GM12878 (cell line): ENCODE measurements at regions of chr4 and their contacts with region 1.

Region 1: DNA sequence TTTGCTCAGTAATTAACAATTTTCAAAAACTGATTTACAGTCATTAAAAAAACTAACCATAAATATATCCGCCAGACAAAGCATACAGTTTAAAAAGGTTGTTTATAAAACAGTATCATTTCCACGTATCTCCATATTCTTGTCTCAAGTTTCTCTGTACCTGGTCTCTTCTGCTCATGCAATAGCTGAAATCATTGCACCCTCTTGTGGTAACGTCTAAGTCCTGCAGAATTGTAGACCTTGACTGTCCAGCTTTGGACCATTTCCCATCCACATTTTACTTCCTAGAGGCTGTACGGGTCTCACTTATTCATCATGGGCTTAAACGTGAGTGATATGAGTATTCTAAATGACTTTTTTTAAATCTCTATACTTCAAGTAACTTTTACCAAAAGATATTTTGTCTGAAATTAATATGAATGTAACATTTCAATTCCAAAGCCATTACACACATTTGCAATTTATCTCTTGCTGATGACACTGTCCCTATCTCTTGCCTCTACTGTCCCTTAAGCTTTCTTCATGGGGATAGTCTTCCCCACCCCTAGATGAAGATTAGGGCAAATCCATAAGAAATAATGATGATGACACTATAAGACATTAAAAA is 118.5 kb downstream of the BTC start:
- DNase-seq: no peak
- ATAC-seq: peak; percentile 93
- H3K4me3 ChIP-seq: no peak overlapping the region
- H3K27ac ChIP-seq: no peak overlapping the region
- H3K4me1 ChIP-seq: no peaks in the 10 kb centered on the region
- H3K27me3 ChIP-seq: no peaks in the 10 kb centered on the region
- CTCF ChIP-seq: peak; percentile 70 to 76 (median 71)
- EP300 ChIP-seq: no peak
- POLR2A ChIP-seq: no peak
- RAD21 ChIP-seq: peak; percentile 79

Region 2: DNA sequence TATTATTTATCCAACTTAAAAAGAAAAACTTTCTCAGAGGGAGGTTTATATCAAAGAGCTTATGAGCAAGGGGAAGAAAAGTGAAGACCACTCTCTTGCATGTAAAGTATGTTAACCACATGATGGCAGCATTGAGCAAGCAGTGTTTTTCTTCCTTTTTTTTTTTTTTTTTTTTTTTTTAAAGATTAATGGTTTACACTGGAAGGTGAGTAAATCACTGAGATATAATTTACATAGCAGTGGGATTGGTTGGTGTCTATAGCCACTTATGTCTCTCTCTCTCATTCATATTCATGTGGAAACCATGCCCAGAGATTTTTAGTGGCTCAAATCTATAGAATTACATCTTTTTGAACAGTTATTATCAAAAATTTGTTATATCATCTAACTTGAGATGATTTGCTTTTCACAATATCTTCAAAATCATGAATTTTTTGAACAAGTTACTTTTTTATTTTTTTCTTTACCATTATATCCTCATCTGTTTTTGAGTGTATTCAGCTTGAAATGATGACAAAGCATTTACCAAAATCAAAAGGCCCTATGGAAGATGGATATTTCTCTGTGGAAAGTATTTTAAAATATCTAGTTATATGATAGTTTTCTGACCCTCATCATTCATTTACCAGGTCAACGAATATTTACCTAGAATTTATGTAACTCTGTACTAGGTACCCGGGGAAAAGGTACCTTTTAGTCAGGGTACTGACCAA is 486.3 kb before region 1 on chr4:
- CTCF ChIA-PET with region 1: interaction called, 11 read pairs
- POLR2A ChIA-PET with region 1: no interaction called
- RAD21 ChIA-PET with region 1: interaction called, 5 read pairs
- SMC1A ChIA-PET with region 1: interaction called, 3 read pairs
- in situ Hi-C with region 1: loop called (anchors 10 kb)
- intact Hi-C with region 1: loop called (anchors 5 kb)
- DNase-seq: peak; percentile 25
- ATAC-seq: peak; percentile 90
- H3K4me3 ChIP-seq: no peak overlapping the region
- H3K27ac ChIP-seq: no peak overlapping the region
- H3K4me1 ChIP-seq: no peaks in the 10 kb centered on the region
- H3K27me3 ChIP-seq: no peaks in the 10 kb centered on the region
- CTCF ChIP-seq: peak; percentile 58 to 62 (median 59); a peak in 5 of 6 replicates
- EP300 ChIP-seq: no peak
- POLR2A ChIP-seq: no peak
- RAD21 ChIP-seq: peak; percentile 89

Region 3: DNA sequence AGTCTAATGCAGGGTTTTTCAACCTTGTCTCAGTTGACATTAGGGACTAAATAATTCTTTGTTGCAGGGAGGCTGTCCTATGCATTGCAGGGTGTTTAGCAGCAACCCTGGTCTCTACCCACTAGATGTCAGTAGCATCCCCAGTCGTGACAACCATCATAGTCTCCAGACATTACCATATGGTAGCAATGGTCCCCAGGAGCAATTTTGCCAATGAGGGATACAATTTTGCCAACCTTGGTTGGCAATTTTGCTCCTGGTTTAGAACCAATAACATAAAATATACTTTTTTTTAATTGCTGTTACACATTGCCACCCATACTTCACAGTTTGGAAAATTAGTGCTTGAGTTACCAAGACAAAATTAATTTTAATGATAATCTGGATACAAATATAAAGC is 304.9 kb before region 1 on chr4:
- CTCF ChIA-PET with region 1: interaction called, 95 read pairs
- POLR2A ChIA-PET with region 1: no interaction called
- RAD21 ChIA-PET with region 1: interaction called, 7 read pairs
- SMC1A ChIA-PET with region 1: interaction called, 33 read pairs
- in situ Hi-C with region 1: loop called (anchors 5 kb)
- intact Hi-C with region 1: no loop called
- DNase-seq: no peak
- ATAC-seq: peak; percentile 98
- H3K4me3 ChIP-seq: no peak overlapping the region
- H3K27ac ChIP-seq: no peak overlapping the region
- H3K4me1 ChIP-seq: no peaks in the 10 kb centered on the region
- H3K27me3 ChIP-seq: peaks cover 0 to 3% of the 10 kb centered on the region in 2 experiments; a peak in 1 of 4 replicates
- CTCF ChIP-seq: peak; percentile 66 to 77 (median 71)
- EP300 ChIP-seq: no peak
- POLR2A ChIP-seq: no peak
- RAD21 ChIP-seq: peak; percentile 61

Region 4: GRCh38 chr4:74531963-74532794 is 143.6 kb before region 1 on chr4:
- CTCF ChIA-PET with region 1: interaction called, 7 read pairs
- POLR2A ChIA-PET with region 1: no interaction called
- RAD21 ChIA-PET with region 1: interaction called, 6 read pairs
- SMC1A ChIA-PET with region 1: interaction called, 5 read pairs
- in situ Hi-C with region 1: no loop called
- intact Hi-C with region 1: loop called (anchors 2 kb)
- DNase-seq: peak; percentile 8
- ATAC-seq: peak; percentile 86
- H3K4me3 ChIP-seq: no peak overlapping the region
- H3K27ac ChIP-seq: no peak overlapping the region
- H3K4me1 ChIP-seq: no peaks in the 10 kb centered on the region
- H3K27me3 ChIP-seq: no peaks in the 10 kb centered on the region
- CTCF ChIP-seq: peak; percentile 44 to 59 (median 45)
- EP300 ChIP-seq: no peak
- POLR2A ChIP-seq: no peak
- RAD21 ChIP-seq: peak; percentile 58

Region 5: GRCh38 chr4:74598611-74599290 is 77.0 kb before region 1 on chr4:
- CTCF ChIA-PET with region 1: no interaction called
- POLR2A ChIA-PET with region 1: no interaction called
- RAD21 ChIA-PET with region 1: no interaction called
- SMC1A ChIA-PET with region 1: no interaction called
- in situ Hi-C with region 1: no loop called
- intact Hi-C with region 1: no loop called
- DNase-seq: no peak
- ATAC-seq: no peak
- H3K4me3 ChIP-seq: no peak overlapping the region
- H3K27ac ChIP-seq: no peak overlapping the region
- H3K4me1 ChIP-seq: no peaks in the 10 kb centered on the region
- H3K27me3 ChIP-seq: no peaks in the 10 kb centered on the region
- CTCF ChIP-seq: no peak
- EP300 ChIP-seq: no peak
- POLR2A ChIP-seq: no peak
- RAD21 ChIP-seq: no peak

Region 6: GRCh38 chr4:74665377-74665776 is 10.4 kb before region 1 on chr4:
- CTCF ChIA-PET with region 1: interaction called, 14 read pairs
- POLR2A ChIA-PET with region 1: no interaction called
- RAD21 ChIA-PET with region 1: interaction called, 3 read pairs
- SMC1A ChIA-PET with region 1: interaction called, 4 read pairs
- in situ Hi-C with region 1: no loop called
- intact Hi-C with region 1: no loop called
- DNase-seq: no peak
- ATAC-seq: peak; percentile 64
- H3K4me3 ChIP-seq: no peak overlapping the region
- H3K27ac ChIP-seq: no peak overlapping the region
- H3K4me1 ChIP-seq: no peaks in the 10 kb centered on the region
- H3K27me3 ChIP-seq: no peaks in the 10 kb centered on the region
- CTCF ChIP-seq: no peak
- EP300 ChIP-seq: no peak
- POLR2A ChIP-seq: no peak
- RAD21 ChIP-seq: no peak

Region 7: GRCh38 chr4:74855879-74856278 is 180.1 kb after region 1 on chr4:
- CTCF ChIA-PET with region 1: no interaction called
- POLR2A ChIA-PET with region 1: no interaction called
- RAD21 ChIA-PET with region 1: no interaction called
- SMC1A ChIA-PET with region 1: no interaction called
- in situ Hi-C with region 1: no loop called
- intact Hi-C with region 1: no loop called
- DNase-seq: no peak
- ATAC-seq: no peak
- H3K4me3 ChIP-seq: no peak overlapping the region
- H3K27ac ChIP-seq: no peak overlapping the region
- H3K4me1 ChIP-seq: no peaks in the 10 kb centered on the region
- H3K27me3 ChIP-seq: no peaks in the 10 kb centered on the region
- CTCF ChIP-seq: no peak
- EP300 ChIP-seq: no peak
- POLR2A ChIP-seq: no peak
- RAD21 ChIP-seq: no peak